ENCODE measurements at regions of chr18 and their contacts with region 1.

Region 1: GRCh38 chr18:49041435-49042245 is 90.9 kb upstream of the SMAD7 start:
- DNase-seq: no peak
- H3K4me3 ChIP-seq: no peak overlapping the region
- H3K27ac ChIP-seq: no peak overlapping the region
- H3K4me1 ChIP-seq: peaks cover 5 to 16% (median 8%) of the 10 kb centered on the region in 4 experiments
- H3K27me3 ChIP-seq: no peaks in the 10 kb centered on the region; a peak in 1 of 7 replicates
- CTCF ChIP-seq: peak; percentile 30 to 76 (median 58)
- EP300 ChIP-seq: no peak
- POLR2A ChIP-seq: no peak
- RAD21 ChIP-seq: peak; percentile 53 to 69

Region 2: DNA sequence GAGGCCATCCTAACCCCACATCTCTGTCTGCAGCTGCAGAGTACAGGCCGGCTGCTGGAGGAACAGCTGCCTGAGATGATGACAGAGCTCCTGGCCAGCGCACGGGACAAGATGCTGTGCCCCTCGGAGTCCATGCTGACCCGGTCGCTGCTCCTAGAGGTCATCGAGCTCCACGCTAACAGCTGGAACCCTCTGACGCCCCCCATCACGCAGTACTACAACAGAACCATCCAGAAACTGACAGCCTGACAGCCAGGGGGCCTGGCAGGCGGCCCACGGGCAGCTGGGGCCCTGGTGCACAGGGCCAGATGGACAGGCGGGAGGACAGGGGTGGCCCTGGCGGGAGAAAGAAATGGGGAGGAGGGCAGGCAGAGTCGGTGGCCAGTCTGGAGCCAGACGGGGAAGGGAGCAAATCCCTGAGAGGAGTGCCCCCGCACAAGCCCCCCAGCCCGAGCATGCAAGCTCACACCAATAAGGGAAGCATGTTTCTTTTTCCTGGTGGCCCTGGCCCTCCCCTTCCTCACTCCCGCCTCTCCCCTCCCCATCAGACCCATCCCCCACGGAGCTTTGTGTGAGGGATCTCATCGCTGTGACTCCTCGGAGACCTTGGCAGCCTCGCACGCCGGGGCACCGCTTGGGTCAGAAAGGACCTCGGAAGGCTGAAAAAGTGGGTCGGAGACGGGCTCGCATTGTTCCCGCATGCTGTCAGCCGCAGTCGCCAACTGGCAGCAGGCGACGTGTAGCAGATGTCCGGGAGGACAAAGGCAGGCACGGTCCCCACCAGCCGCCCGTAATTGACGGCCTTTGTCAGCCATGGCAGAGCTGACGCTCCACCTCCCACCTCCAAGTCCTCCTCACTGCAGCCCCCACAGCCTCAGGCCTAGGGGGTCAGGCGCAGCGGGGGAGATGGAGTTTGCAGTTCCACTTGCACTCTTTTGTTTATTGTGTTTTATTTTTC is 182.1 kb before region 1 on chr18:
- CTCF ChIA-PET with region 1: interaction called, 10 read pairs
- POLR2A ChIA-PET with region 1: no interaction called
- DNase-seq: peak in 1 of 2 experiments; percentile 66
- H3K4me3 ChIP-seq: peak overlapping the region in 1 of 4 experiments; percentile 15; a peak in 1 of 8 replicates
- H3K27ac ChIP-seq: no peak overlapping the region
- H3K4me1 ChIP-seq: peaks cover 0 to 29% (median 22%) of the 10 kb centered on the region in 4 experiments; a peak in 6 of 7 replicates
- H3K27me3 ChIP-seq: no peaks in the 10 kb centered on the region
- CTCF ChIP-seq: no peak
- EP300 ChIP-seq: no peak
- POLR2A ChIP-seq: no peak
- RAD21 ChIP-seq: no peak

Region 3: DNA sequence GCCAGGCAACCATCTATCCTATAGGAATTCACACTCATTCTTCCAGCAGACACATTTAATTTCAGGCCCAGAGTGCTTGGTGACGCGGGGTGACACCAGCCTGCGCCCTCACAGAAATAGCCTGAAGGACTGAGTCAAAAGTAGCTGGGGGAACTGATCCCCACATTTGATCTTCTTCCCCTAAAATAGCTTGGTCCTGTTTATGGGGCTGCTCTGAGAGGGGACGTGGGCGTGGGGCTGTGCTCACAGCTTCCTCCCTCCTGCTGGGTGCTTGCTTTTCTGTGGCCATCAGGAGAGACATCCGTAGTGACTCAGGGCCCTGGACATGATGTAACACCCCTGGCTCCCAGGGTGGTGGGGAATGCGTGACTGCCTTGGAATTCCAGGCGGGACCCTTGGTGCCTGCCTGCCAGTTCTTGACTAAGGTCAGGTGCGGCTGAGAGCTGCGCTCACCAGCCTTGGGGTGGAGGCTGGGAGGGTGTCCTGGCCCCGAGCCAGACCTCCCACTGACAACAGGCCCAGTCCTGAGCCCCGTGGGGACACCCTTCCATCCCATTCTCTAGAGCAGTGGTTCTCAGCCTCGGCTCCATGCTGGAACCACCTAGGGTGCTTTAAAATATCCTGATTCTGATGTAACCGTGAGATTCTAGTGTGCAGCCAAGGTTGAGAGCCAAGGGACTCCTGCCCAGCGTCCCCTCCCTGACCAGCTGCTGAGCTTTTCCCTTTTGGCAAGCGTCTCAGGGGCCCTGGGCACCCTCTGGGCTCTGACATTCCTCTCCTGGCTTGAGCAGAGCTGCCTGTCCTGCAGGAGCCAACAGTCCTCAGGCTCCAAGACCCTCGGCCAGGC is 43.4 kb before region 1 on chr18:
- CTCF ChIA-PET with region 1: interaction called, 34 read pairs
- POLR2A ChIA-PET with region 1: no interaction called
- DNase-seq: peak in 1 of 2 experiments; percentile 70
- H3K4me3 ChIP-seq: no peak overlapping the region
- H3K27ac ChIP-seq: no peak overlapping the region
- H3K4me1 ChIP-seq: peaks cover 6 to 14% (median 10%) of the 10 kb centered on the region in 4 experiments
- H3K27me3 ChIP-seq: no peaks in the 10 kb centered on the region; a peak in 3 of 7 replicates
- CTCF ChIP-seq: no peak
- EP300 ChIP-seq: 0 out of 3 replicates have a peak, but pooled peaks of 1 of the 2 experiments have one; percentile 28
- POLR2A ChIP-seq: no peak
- RAD21 ChIP-seq: no peak

Region 4: DNA sequence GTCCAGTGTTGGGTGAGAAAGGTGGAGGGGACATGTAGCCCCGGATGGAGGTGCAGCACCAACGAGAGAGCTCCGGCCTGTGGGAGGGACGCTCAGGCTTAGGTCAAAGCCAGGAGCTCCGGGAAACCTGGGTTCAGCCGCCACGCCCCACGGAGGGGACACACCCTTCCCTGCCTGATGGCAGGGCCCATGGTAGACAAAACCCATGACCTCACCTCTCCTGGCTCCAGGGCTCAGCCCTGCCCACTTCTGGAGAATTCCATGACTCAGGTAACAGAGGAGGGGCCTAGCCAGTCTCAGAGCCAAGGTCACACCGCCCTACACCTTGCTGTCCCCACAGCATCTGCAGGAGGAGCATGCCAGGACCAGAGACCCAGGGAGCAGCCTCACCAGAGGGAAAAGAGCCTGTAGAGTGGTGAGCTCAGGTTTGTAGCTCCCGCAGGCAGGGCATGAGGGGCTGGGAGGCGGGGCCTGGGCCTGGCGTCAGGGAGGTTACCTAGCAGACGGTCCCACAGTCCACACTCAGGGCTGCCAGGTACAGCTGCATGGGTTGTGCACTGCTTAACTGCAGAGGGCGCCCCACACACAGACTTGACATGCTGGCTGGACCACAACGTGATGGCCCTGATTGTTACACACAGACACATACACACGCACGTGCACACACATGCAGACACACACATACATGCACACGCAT is 20.1 kb before region 1 on chr18:
- CTCF ChIA-PET with region 1: interaction called, 111 read pairs
- POLR2A ChIA-PET with region 1: interaction called, 3 read pairs
- DNase-seq: peak; percentile 64 to 89
- H3K4me3 ChIP-seq: no peak overlapping the region
- H3K27ac ChIP-seq: no peak overlapping the region
- H3K4me1 ChIP-seq: peaks cover 0 to 15% (median 13%) of the 10 kb centered on the region in 4 experiments; a peak in 6 of 7 replicates
- H3K27me3 ChIP-seq: no peaks in the 10 kb centered on the region; a peak in 1 of 7 replicates
- CTCF ChIP-seq: peak in 2 of 3 experiments; percentile 64 to 91; a peak in 3 of 4 replicates
- EP300 ChIP-seq: no peak
- POLR2A ChIP-seq: no peak
- RAD21 ChIP-seq: peak; percentile 84 to 88

Region 5: DNA sequence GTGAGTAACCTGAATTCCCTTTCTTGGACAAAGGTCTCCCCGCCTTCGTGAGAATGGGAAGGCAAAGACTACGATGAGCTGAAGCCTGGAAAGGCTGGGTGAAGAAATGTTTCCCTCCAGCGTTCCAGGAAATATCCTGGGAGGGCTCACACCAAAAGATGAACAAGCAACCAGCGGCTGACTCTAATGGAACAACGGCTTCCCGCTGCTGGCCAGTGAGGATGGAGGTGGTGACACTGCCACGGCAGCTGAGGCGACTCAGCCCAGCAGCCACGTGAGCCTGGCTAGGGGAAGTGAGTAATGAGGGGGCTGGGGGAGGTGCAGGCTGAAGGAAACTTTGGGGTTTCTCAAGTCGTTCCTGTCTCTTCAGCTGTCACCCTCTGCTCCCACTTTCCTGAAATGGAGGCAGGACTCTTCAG is 14.1 kb after region 1 on chr18:
- CTCF ChIA-PET with region 1: interaction called, 55 read pairs
- POLR2A ChIA-PET with region 1: interaction called, 4 read pairs
- DNase-seq: no peak
- H3K4me3 ChIP-seq: no peak overlapping the region
- H3K27ac ChIP-seq: no peak overlapping the region
- H3K4me1 ChIP-seq: no peaks in the 10 kb centered on the region
- H3K27me3 ChIP-seq: no peaks in the 10 kb centered on the region
- CTCF ChIP-seq: no peak
- EP300 ChIP-seq: no peak
- POLR2A ChIP-seq: no peak
- RAD21 ChIP-seq: no peak